Panc1 (cell line): ENCODE measurements at regions of chr1 and their contacts with region 1.

Region 1: GRCh38 chr1:27648602-27649305 is 13.8 kb upstream of the FGR start:
- DNase-seq: no peak
- ATAC-seq: no peak
- H3K4me3 ChIP-seq: no peak overlapping the region
- H3K27ac ChIP-seq: no peak overlapping the region
- H3K4me1 ChIP-seq: peaks cover 2% of the 10 kb centered on the region; the same call in 1 of the 2 replicates
- H3K27me3 ChIP-seq: no peaks in the 10 kb centered on the region
- CTCF ChIP-seq: no peak

Region 2: DNA sequence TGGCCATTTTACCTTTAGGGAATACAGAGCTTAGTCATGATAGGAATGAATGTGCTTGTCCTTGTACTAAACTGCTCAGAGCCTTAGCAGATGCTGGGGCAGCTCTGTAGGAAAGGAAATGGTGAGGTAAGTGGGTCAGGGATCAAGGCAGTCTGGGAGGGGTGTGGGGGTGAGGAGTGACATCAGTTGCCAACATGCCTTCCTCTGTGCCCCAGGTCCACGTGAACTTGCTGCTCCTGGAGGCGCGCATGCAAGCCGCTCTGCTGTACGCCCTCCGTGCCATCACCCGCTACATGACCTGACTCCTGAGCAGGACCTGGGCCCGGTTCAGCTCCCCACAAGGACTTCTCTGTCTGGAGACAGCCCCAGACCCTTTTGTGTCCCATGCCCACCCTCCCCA is 631.7 kb after region 1 on chr1:
- CTCF ChIA-PET with region 1: no interaction called
- POLR2A ChIA-PET with region 1: interaction called, 11 read pairs
- in situ Hi-C with region 1: no loop called
- intact Hi-C with region 1: no loop called
- DNase-seq: no peak
- ATAC-seq: no peak
- H3K4me3 ChIP-seq: no peak overlapping the region
- H3K27ac ChIP-seq: no peak overlapping the region
- H3K4me1 ChIP-seq: no peaks in the 10 kb centered on the region
- H3K27me3 ChIP-seq: no peaks in the 10 kb centered on the region
- CTCF ChIP-seq: no peak